GM23248 (cell line): ENCODE measurements at regions of chr6 and their contacts with region 1.

Region 1: GRCh38 chr6:105733565-105734162 is 330.8 kb upstream of the PREP start:
- DNase-seq: peak; percentile 70
- H3K4me3 ChIP-seq: no peak overlapping the region
- H3K27ac ChIP-seq: no peak overlapping the region
- H3K4me1 ChIP-seq: no peaks in the 10 kb centered on the region
- H3K27me3 ChIP-seq: no peaks in the 10 kb centered on the region

Region 2: GRCh38 chr6:106223300-106223930 is 489.8 kb after region 1 on chr6:
- in situ Hi-C with region 1: loop called (anchors 25 kb)
- DNase-seq: peak; percentile 83
- H3K4me3 ChIP-seq: no peak overlapping the region
- H3K27ac ChIP-seq: no peak overlapping the region
- H3K4me1 ChIP-seq: peaks cover 5% of the 10 kb centered on the region; the same call in 1 of the 2 replicates
- H3K27me3 ChIP-seq: no peaks in the 10 kb centered on the region